CD8-positive, alpha-beta T cell (primary cell): ENCODE measurements at regions of chr6 and their contacts with region 1.

Region 1: DNA sequence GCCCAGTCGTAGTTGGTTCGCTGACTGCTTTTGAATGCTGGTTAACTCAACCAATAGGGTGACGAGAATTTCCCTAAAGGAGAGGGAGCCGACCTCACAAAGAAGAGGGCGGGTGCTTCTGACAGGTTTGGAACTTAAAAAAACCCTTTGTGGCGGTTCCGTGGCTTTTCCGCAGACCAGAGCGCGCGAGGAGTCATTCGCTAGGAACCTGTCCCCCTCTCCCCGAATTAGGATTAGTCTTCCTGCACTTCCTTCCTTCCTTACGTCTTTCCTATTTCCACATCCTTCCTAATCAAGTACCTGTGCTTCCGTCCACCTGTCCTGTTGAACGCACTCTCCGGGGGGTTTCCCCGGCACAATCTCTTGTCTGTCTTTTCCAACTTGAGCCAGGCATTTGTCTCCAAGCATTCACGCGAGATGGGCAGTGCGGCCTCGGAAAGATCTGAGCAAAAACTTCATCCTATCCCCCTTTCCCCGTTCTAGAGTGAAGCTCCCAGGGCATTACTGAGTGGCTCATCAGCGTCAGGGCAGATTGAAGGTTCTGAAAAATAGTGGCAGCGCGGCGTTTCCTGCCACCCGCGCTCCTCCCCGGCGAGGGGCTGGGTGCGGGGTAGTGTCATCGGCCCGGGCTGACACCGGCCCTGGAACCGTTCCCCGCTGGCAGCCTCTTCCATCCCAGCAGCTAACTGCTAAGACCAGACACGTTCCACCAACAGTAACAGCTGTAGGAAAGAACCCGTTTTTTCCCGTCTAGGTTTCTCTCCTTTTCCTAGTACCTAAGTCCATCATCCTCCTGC is 1.5 kb upstream of the STXBP5 start:
- DNase-seq: peak; percentile 56 to 96 (median 80)
- ATAC-seq: peak; percentile 83
- H3K4me3 ChIP-seq: peak overlapping the region; percentile 76 to 95
- H3K4me3 Mint-ChIP-seq: peak overlapping the region; percentile 95
- H3K27ac ChIP-seq: peak overlapping the region; percentile 86 to 93
- H3K27ac Mint-ChIP-seq: peak overlapping the region; percentile 99
- H3K4me1 ChIP-seq: peaks cover 12% of the 10 kb centered on the region
- H3K4me1 Mint-ChIP-seq: peaks cover 35% of the 10 kb centered on the region
- H3K27me3 ChIP-seq: no peaks in the 10 kb centered on the region
- H3K27me3 Mint-ChIP-seq: no peaks in the 10 kb centered on the region
- CTCF ChIP-seq: no peak

Region 2: GRCh38 chr6:145734486-145735355 is 1468.0 kb before region 1 on chr6:
- CTCF ChIA-PET with region 1: no interaction called
- POLR2A ChIA-PET with region 1: no interaction called
- intact Hi-C with region 1: loop called (anchors 10 kb)
- DNase-seq: peak; percentile 26 to 80 (median 65)
- ATAC-seq: peak; percentile 54
- H3K4me3 ChIP-seq: peak overlapping the region; percentile 52 to 67
- H3K4me3 Mint-ChIP-seq: peak overlapping the region; percentile 96
- H3K27ac ChIP-seq: peak overlapping the region; percentile 52 to 72
- H3K27ac Mint-ChIP-seq: peak overlapping the region; percentile 98
- H3K4me1 ChIP-seq: peaks cover 19% of the 10 kb centered on the region
- H3K4me1 Mint-ChIP-seq: peaks cover 34% of the 10 kb centered on the region
- H3K27me3 ChIP-seq: no peaks in the 10 kb centered on the region
- H3K27me3 Mint-ChIP-seq: no peaks in the 10 kb centered on the region
- CTCF ChIP-seq: no peak

Region 3: DNA sequence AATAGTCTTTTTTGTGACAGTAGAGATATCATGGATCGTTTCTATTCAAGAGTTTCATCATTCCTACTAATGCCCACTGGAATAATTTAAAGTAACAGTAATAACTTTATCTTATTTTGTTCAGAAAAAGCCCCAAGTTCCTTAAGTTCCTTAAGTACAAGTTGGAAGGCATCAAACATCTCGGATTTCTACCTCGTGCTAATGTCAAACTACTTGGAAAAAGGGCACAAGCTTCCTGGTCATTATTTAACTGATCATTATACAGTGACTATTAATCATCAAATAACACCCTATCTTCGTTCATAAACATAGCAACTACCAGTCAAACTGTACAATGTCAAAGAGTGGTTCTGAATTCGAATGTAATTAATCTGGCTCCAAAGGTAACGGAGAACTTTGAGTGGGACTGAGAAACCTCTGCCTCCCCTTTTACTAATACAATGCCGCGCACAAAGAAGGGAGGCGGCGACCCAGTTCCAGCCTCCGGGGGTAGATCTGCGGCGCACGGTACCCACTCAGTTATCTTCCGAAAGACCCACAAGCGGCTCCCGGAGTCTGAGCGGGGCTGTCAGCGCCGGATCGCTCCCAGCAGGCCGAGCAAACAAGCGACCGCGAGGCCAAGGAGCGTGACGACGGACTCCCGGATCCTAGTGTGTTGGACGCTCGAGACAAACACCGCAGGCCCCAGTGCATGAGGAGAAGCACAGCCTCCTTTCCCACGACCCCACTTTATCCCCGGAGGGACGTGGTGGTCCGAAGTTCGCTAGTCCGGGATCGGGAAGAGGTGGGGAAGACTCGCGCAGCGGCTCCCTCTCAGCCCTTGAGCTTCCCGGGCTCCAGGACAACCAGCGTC is 1239.3 kb before region 1 on chr6:
- CTCF ChIA-PET with region 1: no interaction called
- POLR2A ChIA-PET with region 1: interaction called, 3 read pairs
- intact Hi-C with region 1: loop called (anchors 1 to 5 kb)
- DNase-seq: peak in 8 of 9 experiments; percentile 19 to 63 (median 47)
- ATAC-seq: peak; percentile 22
- H3K4me3 ChIP-seq: peak overlapping the region; percentile 73 to 94
- H3K4me3 Mint-ChIP-seq: peak overlapping the region; percentile 98
- H3K27ac ChIP-seq: peak overlapping the region; percentile 79 to 82
- H3K27ac Mint-ChIP-seq: peak overlapping the region; percentile 99
- H3K4me1 ChIP-seq: peaks cover 28% of the 10 kb centered on the region
- H3K4me1 Mint-ChIP-seq: peaks cover 63% of the 10 kb centered on the region
- H3K27me3 ChIP-seq: no peaks in the 10 kb centered on the region
- H3K27me3 Mint-ChIP-seq: no peaks in the 10 kb centered on the region
- CTCF ChIP-seq: no peak

Region 4: GRCh38 chr6:147222160-147222838 is 19.6 kb after region 1 on chr6:
- CTCF ChIA-PET with region 1: no interaction called
- POLR2A ChIA-PET with region 1: interaction called, 4 read pairs
- intact Hi-C with region 1: loop called in 1 of 2 experiments (anchors 2 kb)
- DNase-seq: peak in 2 of 9 experiments; percentile 29 to 44
- ATAC-seq: peak; percentile 61
- H3K4me3 ChIP-seq: no peak overlapping the region
- H3K4me3 Mint-ChIP-seq: no peak overlapping the region
- H3K27ac ChIP-seq: no peak overlapping the region
- H3K27ac Mint-ChIP-seq: peak overlapping the region; percentile 62
- H3K4me1 ChIP-seq: peaks cover 11% of the 10 kb centered on the region
- H3K4me1 Mint-ChIP-seq: peaks cover 60% of the 10 kb centered on the region
- H3K27me3 ChIP-seq: no peaks in the 10 kb centered on the region
- H3K27me3 Mint-ChIP-seq: no peaks in the 10 kb centered on the region
- CTCF ChIP-seq: peak; percentile 58

Region 5: DNA sequence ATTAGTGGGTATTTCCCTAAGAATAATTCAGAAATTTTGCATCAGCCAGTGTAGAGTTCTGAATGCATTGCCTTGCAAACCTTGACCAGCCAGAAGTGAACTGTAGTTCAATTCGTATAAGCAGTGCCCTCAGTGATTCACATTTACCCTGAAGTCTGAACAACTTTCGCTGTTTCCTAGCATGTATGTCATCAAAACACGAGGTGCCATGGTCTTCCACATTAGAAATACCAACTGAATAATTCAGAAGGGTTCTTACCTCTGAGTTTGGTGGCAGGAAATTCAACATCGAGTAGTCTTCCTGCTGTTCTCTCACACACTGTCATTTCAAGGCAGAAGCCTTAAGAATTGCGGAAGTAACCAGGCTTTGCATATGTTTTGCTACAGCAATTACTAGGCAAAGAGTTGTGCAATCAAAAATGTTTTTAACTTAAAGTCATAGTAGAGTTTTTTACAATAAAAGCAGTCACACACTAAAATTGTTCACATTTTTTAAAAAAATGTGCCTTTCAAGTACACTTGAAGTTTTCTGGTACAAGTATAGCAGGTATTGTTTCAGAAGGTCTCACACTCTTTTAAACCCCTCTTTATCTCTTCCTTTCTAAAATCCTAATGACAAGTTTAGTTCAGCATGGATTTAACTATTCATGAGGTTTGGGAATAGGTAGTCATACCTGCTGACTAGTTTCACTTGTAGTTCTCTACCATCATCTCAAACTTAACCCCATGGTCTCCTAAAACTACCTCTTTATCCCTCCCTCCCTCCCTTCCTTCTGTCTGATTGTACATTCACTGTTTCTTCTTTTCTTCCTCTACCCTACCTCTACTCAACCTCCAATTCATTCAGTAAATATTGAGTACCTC is 119.8 kb after region 1 on chr6:
- CTCF ChIA-PET with region 1: no interaction called
- POLR2A ChIA-PET with region 1: no interaction called
- intact Hi-C with region 1: loop called in 1 of 2 experiments (anchors 5 kb)
- DNase-seq: peak in 4 of 9 experiments; percentile 10 to 63 (median 28)
- ATAC-seq: peak; percentile 92
- H3K4me3 ChIP-seq: peak overlapping the region; percentile 8 to 31
- H3K4me3 Mint-ChIP-seq: peak overlapping the region; percentile 59
- H3K27ac ChIP-seq: peak overlapping the region; percentile 17 to 79
- H3K27ac Mint-ChIP-seq: peak overlapping the region; percentile 89
- H3K4me1 ChIP-seq: peaks cover 17% of the 10 kb centered on the region
- H3K4me1 Mint-ChIP-seq: peaks cover 25% of the 10 kb centered on the region
- H3K27me3 ChIP-seq: no peaks in the 10 kb centered on the region
- H3K27me3 Mint-ChIP-seq: no peaks in the 10 kb centered on the region
- CTCF ChIP-seq: no peak

Region 6: GRCh38 chr6:148144917-148145521 is 942.3 kb after region 1 on chr6:
- CTCF ChIA-PET with region 1: no interaction called
- POLR2A ChIA-PET with region 1: no interaction called
- intact Hi-C with region 1: no loop called
- DNase-seq: peak; percentile 5 to 56 (median 51)
- ATAC-seq: no peak
- H3K4me3 ChIP-seq: no peak overlapping the region
- H3K4me3 Mint-ChIP-seq: no peak overlapping the region
- H3K27ac ChIP-seq: no peak overlapping the region
- H3K27ac Mint-ChIP-seq: no peak overlapping the region
- H3K4me1 ChIP-seq: no peaks in the 10 kb centered on the region
- H3K4me1 Mint-ChIP-seq: peaks cover 7% of the 10 kb centered on the region
- H3K27me3 ChIP-seq: no peaks in the 10 kb centered on the region
- H3K27me3 Mint-ChIP-seq: peaks cover 2% of the 10 kb centered on the region
- CTCF ChIP-seq: peak; percentile 61